ENCODE measurements at regions of chr6 and their contacts with region 1.

Region 1: DNA sequence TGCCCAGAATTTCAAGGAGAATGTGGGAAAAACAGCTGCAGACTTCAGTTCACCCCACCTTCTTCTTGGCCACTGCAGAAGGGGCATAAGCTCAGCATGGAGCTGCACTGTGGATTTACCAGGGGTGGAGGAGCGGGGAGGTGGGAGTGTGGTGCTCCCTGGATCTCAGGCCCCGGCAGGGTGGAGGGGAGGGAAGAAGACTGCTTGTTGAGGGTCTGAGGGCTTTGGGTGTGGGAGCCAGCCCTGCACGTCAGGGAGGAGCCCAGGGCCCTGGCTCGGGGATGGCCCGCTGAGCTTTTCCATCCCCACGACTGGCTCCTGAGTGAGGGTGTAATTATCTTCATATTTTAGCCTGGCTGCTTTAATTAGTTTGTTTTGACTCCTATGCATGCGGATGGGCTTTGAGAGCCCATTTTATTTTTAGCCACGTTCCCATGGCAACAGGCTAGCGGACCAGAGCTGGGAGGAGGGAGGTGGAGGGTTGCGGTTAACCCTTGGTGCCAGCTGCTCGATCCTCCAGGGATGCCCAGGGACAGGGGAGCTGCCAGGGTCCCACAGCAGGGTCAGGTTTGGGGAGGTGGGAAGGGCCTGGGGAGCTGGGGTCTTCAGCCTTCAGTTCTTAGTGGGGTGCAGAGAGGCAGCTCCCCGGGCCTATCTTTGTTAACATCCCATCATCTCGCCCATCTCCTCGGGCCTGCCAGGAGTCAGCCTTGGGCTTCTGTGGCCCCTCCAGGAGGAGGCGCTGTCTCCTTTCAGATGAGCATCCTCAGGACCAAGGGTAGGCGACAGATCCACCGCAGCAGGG is 68.2 kb downstream of the RAB44 start:
- DNase-seq: peak; percentile 72 to 98 (median 86)

Region 2: DNA sequence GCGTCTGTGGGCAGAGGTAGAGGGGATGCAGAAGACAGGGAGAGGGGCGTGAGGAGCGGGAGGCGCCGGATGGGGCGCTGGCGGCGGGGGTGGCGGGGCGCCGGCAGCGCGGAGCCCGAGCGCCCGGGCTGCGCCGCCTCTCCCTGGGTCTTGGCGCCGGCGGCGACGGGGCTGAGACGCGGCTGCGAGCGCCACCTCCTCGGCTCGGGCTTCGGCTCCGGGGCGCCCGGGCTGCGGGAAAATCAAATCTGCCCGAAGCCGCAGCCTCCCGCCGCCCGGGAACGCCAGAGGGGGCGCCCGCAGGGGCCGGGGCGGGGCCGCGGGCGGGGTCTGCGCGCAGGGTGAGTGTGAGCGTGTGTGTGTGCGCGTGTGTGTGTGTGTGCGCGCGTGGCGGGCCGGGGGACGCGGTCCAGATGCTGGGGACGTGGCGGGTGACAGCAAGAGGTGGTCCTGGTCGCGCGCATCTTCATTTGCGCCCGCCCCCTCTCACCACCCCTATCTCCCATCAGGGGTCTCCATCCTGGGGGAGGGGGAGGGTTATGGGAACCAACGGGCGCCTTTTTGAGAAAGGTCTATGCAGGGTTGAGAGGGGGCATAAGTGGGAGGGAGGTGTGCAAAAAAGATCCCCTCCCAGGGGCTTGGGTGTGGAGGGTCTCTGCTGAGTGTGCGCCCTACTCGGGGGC is 74.1 kb after region 1 on chr6:
- intact Hi-C with region 1: loop called (anchors 10 kb)
- DNase-seq: peak in 7 of 10 donors; percentile 42 to 93 (median 55)

Region 3: GRCh38 chr6:36851149-36851614 is 85.4 kb after region 1 on chr6:
- intact Hi-C with region 1: loop called (anchors 1 kb)
- DNase-seq: peak in 2 of 10 donors; percentile 54 to 63

Region 4: GRCh38 chr6:36985808-36986703 is 220.3 kb after region 1 on chr6 and contains the start of gene MTCH1:
- intact Hi-C with region 1: loop called (anchors 10 kb)
- DNase-seq: peak; percentile 84 to 99 (median 89)

Region 5: DNA sequence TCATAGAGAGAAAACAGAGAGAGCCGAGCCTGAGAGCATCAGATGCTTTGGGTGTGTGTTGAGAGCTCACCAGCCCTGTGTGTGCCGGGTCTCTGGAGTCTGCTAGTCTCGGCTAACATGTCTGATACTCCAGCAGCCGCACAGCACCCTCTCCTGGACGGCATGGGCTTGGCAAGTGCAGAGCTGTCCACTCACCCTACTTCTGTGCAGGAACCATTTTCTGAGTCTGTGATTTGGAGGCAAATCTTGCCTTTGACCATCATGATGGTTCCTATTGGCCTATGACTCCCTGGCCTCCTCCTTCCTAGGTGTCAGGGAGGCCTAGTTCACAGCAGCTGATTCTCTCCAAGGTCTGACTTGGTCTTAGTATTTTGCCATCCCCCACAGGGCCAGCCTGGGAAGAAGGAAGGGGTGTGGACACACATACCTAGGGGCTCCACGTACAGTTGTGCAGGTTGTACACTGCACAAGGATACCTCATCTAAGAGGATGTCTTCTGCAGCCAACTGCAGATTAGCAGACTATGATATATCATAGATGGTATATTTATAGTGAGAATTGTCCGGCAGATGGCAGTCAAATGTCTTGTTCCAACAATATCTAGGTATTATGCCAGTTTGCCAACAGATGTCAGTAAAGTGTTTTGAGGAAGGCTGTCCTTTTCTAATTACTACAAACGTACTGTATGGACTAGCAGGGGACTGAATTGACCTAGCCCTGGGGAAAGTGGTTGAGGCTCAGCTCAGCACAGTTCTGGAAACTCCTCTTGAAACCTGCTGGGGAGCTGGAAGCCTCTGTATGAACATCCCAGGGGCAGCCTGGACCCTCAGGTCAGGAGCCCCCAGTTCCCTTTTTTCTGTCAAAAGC is 252.6 kb after region 1 on chr6:
- intact Hi-C with region 1: loop called (anchors 5 kb)
- DNase-seq: peak; percentile 85 to 99 (median 94)